ENCODE measurements at regions of chr18 and their contacts with region 1.

Region 1: DNA sequence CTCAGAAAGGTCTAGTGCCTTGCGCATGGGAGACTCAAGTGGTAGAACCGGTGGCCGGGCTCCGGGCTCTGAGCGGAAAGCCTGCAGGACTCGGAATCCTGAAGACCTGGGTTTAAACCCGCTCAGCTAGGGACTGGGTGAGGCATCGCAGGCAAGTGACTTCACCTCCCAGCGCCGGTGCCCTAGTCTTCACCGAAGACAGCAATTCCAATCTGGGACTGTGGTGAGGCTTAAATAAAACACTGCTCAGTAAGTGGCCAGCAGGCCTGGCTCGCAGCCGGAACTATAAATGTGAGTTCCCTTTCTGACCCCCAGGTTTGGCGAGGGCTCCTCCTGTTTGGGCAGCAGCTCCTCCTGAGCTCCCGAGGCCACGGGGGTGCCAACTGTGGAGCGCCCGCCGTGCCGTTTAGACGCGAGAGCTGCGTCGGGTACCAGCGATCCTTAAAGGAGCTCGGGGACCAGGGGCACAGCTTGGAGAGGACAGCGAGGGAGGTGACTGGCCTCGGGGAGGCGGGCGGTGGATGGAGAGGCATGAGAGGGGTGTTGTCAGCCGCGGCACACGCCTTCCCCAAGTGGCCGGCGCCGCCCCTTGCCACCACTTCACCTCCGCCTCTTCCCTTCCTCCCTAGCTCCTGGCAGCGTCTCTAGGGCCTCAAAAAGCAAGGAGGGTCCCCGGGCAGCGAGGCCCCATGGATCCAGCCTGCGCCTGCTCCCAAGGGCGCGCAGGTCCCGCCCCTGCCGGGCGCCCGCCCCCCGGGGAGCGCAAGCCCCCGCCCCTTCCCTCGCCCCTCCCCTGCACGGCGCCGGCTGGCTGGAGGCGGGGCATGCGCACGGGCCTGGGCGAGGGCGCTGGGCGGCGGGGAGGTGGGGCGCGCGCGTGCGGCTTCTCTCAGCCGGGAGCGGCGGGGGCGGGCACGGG is 736 bp upstream of the MTCL1 start:
- DNase-seq: peak; percentile 59 to 91 (median 84)
- ATAC-seq: peak; percentile 95
- H3K4me3 ChIP-seq: peak overlapping the region; percentile 73
- H3K4me3 Mint-ChIP-seq: peak overlapping the region; percentile 89
- H3K27ac ChIP-seq: no peak overlapping the region
- H3K27ac Mint-ChIP-seq: no peak overlapping the region
- H3K4me1 ChIP-seq: peaks cover 15% of the 10 kb centered on the region
- H3K4me1 Mint-ChIP-seq: peaks cover 17% of the 10 kb centered on the region
- H3K27me3 ChIP-seq: peaks cover 16 to 24% of the 10 kb centered on the region in 2 experiments
- H3K27me3 Mint-ChIP-seq: peaks cover 62% of the 10 kb centered on the region
- CTCF ChIP-seq: no peak

Region 2: GRCh38 chr18:7987284-7987976 is 717.2 kb before region 1 on chr18:
- CTCF ChIA-PET with region 1: no interaction called
- POLR2A ChIA-PET with region 1: no interaction called
- intact Hi-C with region 1: no loop called
- DNase-seq: no peak
- ATAC-seq: no peak
- H3K4me3 ChIP-seq: no peak overlapping the region
- H3K4me3 Mint-ChIP-seq: no peak overlapping the region
- H3K27ac ChIP-seq: no peak overlapping the region
- H3K27ac Mint-ChIP-seq: no peak overlapping the region
- H3K4me1 ChIP-seq: no peaks in the 10 kb centered on the region
- H3K4me1 Mint-ChIP-seq: no peaks in the 10 kb centered on the region
- H3K27me3 ChIP-seq: no peaks in the 10 kb centered on the region
- H3K27me3 Mint-ChIP-seq: no peaks in the 10 kb centered on the region
- CTCF ChIP-seq: no peak

Region 3: DNA sequence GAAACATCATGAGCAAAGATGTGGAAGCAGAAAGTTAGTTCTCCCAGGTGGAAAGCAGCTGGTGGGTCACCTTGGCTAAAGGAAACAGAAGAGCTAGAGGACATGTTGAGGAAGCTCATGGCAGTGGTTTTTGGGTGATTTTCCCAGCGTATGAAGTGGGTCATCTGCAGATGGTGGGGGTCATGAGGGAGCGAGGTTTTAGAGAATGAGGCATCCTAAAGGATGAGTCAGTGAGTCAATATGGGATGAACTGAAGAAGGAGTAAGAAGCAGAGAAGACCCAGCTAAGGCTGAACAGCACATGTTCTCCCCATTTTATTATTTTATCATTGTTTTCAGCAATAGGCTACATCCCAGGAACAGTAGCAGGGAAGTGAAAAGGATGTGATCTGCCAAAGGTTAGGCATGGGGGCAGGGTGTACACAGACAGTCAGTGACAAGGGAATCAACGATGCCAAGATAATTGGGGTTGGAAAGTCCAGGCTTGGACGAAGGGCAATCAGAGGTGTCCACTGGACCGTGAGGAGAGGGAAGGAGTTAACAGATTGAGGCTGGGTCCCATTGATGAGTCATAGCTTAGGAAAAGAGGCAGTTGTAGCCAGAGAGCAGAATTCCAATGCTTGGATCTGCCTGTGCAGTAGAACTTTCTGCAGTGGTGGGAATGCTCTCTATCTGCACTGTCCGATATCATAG is 384.7 kb before region 1 on chr18:
- CTCF ChIA-PET with region 1: no interaction called
- POLR2A ChIA-PET with region 1: no interaction called
- intact Hi-C with region 1: no loop called
- DNase-seq: no peak
- ATAC-seq: no peak
- H3K4me3 ChIP-seq: no peak overlapping the region
- H3K4me3 Mint-ChIP-seq: no peak overlapping the region
- H3K27ac ChIP-seq: no peak overlapping the region
- H3K27ac Mint-ChIP-seq: no peak overlapping the region
- H3K4me1 ChIP-seq: no peaks in the 10 kb centered on the region
- H3K4me1 Mint-ChIP-seq: no peaks in the 10 kb centered on the region
- H3K27me3 ChIP-seq: no peaks in the 10 kb centered on the region
- H3K27me3 Mint-ChIP-seq: no peaks in the 10 kb centered on the region
- CTCF ChIP-seq: no peak

Region 4: DNA sequence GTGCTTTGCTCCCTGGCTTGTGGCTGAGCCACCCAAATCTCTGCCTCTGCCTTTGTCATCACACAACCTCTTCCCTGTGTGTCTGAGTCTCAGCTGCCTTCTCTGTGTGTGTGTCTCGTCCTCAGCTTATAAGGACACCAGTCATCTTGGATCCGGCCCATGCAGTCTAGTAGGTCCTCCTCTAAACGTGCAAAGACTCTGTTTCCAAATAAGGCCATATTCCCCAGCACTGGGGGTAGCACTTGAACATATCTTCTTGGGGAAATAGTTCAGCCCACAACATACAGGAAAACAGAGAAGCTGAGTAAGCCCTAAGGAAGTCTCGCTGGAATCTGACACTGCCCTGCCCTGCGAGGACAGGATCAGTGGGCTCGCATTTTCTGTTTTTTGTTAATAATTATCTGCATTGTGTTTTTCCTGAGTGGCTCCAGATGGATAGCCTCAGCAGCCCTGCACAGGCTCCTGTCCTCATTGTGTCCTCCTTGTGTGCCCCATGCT is 42.9 kb after region 1 on chr18:
- CTCF ChIA-PET with region 1: no interaction called
- POLR2A ChIA-PET with region 1: no interaction called
- intact Hi-C with region 1: loop called in 1 of 2 experiments (anchors 2 kb)
- DNase-seq: no peak
- ATAC-seq: no peak
- H3K4me3 ChIP-seq: no peak overlapping the region
- H3K4me3 Mint-ChIP-seq: no peak overlapping the region
- H3K27ac ChIP-seq: no peak overlapping the region
- H3K27ac Mint-ChIP-seq: no peak overlapping the region
- H3K4me1 ChIP-seq: peaks cover 31% of the 10 kb centered on the region
- H3K4me1 Mint-ChIP-seq: peaks cover 36% of the 10 kb centered on the region
- H3K27me3 ChIP-seq: no peaks in the 10 kb centered on the region
- H3K27me3 Mint-ChIP-seq: no peaks in the 10 kb centered on the region
- CTCF ChIP-seq: no peak

Region 5: GRCh38 chr18:8777846-8778245 is 73.2 kb after region 1 on chr18:
- CTCF ChIA-PET with region 1: no interaction called
- POLR2A ChIA-PET with region 1: no interaction called
- intact Hi-C with region 1: no loop called
- DNase-seq: no peak
- ATAC-seq: no peak
- H3K4me3 ChIP-seq: no peak overlapping the region
- H3K4me3 Mint-ChIP-seq: no peak overlapping the region
- H3K27ac ChIP-seq: no peak overlapping the region
- H3K27ac Mint-ChIP-seq: no peak overlapping the region
- H3K4me1 ChIP-seq: no peaks in the 10 kb centered on the region
- H3K4me1 Mint-ChIP-seq: no peaks in the 10 kb centered on the region
- H3K27me3 ChIP-seq: no peaks in the 10 kb centered on the region
- H3K27me3 Mint-ChIP-seq: peaks cover 2% of the 10 kb centered on the region
- CTCF ChIP-seq: no peak

Region 6: GRCh38 chr18:8800449-8800848 is 95.8 kb after region 1 on chr18:
- CTCF ChIA-PET with region 1: no interaction called
- POLR2A ChIA-PET with region 1: no interaction called
- intact Hi-C with region 1: loop called in 1 of 2 experiments (anchors 10 kb)
- DNase-seq: no peak
- ATAC-seq: no peak
- H3K4me3 ChIP-seq: no peak overlapping the region
- H3K4me3 Mint-ChIP-seq: no peak overlapping the region
- H3K27ac ChIP-seq: no peak overlapping the region
- H3K27ac Mint-ChIP-seq: no peak overlapping the region
- H3K4me1 ChIP-seq: no peaks in the 10 kb centered on the region
- H3K4me1 Mint-ChIP-seq: peaks cover 9% of the 10 kb centered on the region
- H3K27me3 ChIP-seq: no peaks in the 10 kb centered on the region
- H3K27me3 Mint-ChIP-seq: peaks cover 2% of the 10 kb centered on the region
- CTCF ChIP-seq: no peak

Region 7: GRCh38 chr18:8870528-8870927 is 165.9 kb after region 1 on chr18:
- CTCF ChIA-PET with region 1: no interaction called
- POLR2A ChIA-PET with region 1: no interaction called
- intact Hi-C with region 1: no loop called
- DNase-seq: no peak
- ATAC-seq: no peak
- H3K4me3 ChIP-seq: no peak overlapping the region
- H3K4me3 Mint-ChIP-seq: no peak overlapping the region
- H3K27ac ChIP-seq: no peak overlapping the region
- H3K27ac Mint-ChIP-seq: no peak overlapping the region
- H3K4me1 ChIP-seq: no peaks in the 10 kb centered on the region
- H3K4me1 Mint-ChIP-seq: no peaks in the 10 kb centered on the region
- H3K27me3 ChIP-seq: peaks cover 0 to 3% of the 10 kb centered on the region in 2 experiments
- H3K27me3 Mint-ChIP-seq: peaks cover under 1% of the 10 kb centered on the region
- CTCF ChIP-seq: no peak

Region 8: DNA sequence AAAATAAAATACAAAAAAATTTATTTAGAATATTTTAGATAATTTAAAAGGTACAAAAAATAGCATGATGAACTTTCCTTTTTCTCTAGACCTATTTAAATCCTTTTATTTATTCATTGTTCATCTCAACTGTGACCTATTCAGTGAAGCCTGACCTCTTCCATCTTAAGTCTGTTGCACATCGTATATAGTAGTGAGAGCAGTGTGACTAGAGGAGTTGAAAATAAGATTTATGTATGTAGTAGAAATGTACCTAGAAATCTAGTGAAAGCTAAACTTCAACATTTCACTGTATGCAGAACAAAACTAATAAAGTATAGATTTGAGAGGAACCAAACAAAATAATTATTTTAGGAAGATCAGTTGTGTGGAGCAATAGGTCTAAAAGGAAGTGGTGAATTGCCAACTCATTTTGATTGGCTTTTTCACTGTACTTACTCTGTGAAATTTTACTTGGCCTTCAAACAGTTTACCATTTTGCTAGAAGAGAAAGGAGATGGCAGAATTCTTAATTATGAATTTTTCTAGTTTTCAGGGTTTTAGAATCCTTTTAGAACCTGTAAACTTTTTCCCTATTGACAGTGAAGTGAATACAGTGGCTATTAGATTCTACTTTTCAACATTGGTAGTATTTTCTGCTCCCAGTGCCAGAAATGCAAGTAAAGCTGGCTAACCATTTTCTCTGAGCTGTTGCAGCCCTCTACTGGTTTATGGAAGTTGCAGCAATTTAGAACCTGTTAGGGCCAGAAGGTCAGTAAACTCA is 443.0 kb after region 1 on chr18:
- CTCF ChIA-PET with region 1: no interaction called
- POLR2A ChIA-PET with region 1: no interaction called
- intact Hi-C with region 1: loop called in 1 of 2 experiments (anchors 10 kb)
- DNase-seq: peak in 4 of 9 experiments; percentile 22 to 82 (median 52)
- ATAC-seq: peak; percentile 76
- H3K4me3 ChIP-seq: no peak overlapping the region
- H3K4me3 Mint-ChIP-seq: no peak overlapping the region
- H3K27ac ChIP-seq: peak overlapping the region in 1 of 2 experiments; percentile 63
- H3K27ac Mint-ChIP-seq: peak overlapping the region; percentile 84
- H3K4me1 ChIP-seq: peaks cover 45% of the 10 kb centered on the region
- H3K4me1 Mint-ChIP-seq: peaks cover 77% of the 10 kb centered on the region
- H3K27me3 ChIP-seq: no peaks in the 10 kb centered on the region
- H3K27me3 Mint-ChIP-seq: no peaks in the 10 kb centered on the region
- CTCF ChIP-seq: peak; percentile 71

Measured in CD8-positive, alpha-beta T cell (primary cell).